Right cardiac atrium (tissue), 5 donors: ENCODE measurements at regions of chr17 and their contacts with region 1.

Region 1: DNA sequence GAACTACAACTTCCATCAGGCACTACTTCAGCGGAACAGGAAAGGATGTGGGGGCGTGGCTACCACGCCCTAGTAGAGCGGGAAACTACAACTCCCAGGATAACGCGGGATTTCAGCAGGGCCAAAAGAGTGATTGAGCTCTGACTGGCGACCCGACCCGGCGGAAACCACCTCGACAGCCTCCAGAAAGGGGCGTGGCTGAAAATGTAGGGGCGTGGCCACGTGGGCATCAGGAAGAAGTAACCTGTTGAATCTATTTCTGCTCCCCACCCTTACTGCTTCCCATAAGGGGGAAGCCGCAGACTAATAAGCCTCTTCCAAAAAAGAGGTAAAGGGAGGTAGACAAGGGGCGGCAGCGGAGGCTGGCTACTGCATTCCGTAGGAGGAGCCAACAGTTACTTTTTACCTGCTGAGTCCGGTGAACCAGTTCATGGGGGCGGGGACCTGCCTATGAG is at the start of gene TMEM102:
- DNase-seq: peak; percentile 95 to 98 (median 97)
- ATAC-seq: peak; percentile 85 to 88
- H3K4me3 ChIP-seq: peak within 1 kb of the TSS; percentile 53
- H3K27ac ChIP-seq: peak within 1 kb of the TSS; percentile 5
- H3K4me1 ChIP-seq: no peaks in the 10 kb centered on the region
- H3K27me3 ChIP-seq: no peaks in the 10 kb centered on the region
- total RNA-seq, gene TMEM102: 2.2 to 2.5 (median 2.3) TPM

Region 2: GRCh38 chr17:7363311-7363710 is 71.9 kb before region 1 on chr17:
- intact Hi-C with region 1: loop called (anchors 5 to 10 kb)
- DNase-seq: peak in 1 of 3 donors; percentile 14
- ATAC-seq: no peak
- H3K4me3 ChIP-seq: no peak overlapping the region
- H3K27ac ChIP-seq: no peak overlapping the region
- H3K4me1 ChIP-seq: no peaks in the 10 kb centered on the region
- H3K27me3 ChIP-seq: no peaks in the 10 kb centered on the region

Region 3: GRCh38 chr17:7484067-7484918 is 49.0 kb after region 1 on chr17 and contains the start of gene POLR2A:
- intact Hi-C with region 1: loop called in 2 of 4 experiments (anchors 5 kb)
- DNase-seq: peak; percentile 99 to 100 (median 100)
- ATAC-seq: peak; percentile 89 to 92
- H3K4me3 ChIP-seq: peak within 1 kb of the TSS; percentile 76
- H3K27ac ChIP-seq: peak within 1 kb of the TSS; percentile 100
- H3K4me1 ChIP-seq: peaks cover 9% of the 10 kb centered on the region
- H3K27me3 ChIP-seq: no peaks in the 10 kb centered on the region
- total RNA-seq, gene POLR2A: 41.9 to 51.4 (median 47.4) TPM

Region 4: GRCh38 chr17:7561028-7561575 is 125.9 kb after region 1 on chr17:
- intact Hi-C with region 1: loop called in 1 of 4 experiments (anchors 10 kb)
- DNase-seq: peak; percentile 92 to 96 (median 96)
- ATAC-seq: peak; percentile 68 to 76
- H3K4me3 ChIP-seq: peak overlapping the region; percentile 78
- H3K27ac ChIP-seq: peak overlapping the region; percentile 87
- H3K4me1 ChIP-seq: peaks cover 8% of the 10 kb centered on the region
- H3K27me3 ChIP-seq: no peaks in the 10 kb centered on the region

Region 5: DNA sequence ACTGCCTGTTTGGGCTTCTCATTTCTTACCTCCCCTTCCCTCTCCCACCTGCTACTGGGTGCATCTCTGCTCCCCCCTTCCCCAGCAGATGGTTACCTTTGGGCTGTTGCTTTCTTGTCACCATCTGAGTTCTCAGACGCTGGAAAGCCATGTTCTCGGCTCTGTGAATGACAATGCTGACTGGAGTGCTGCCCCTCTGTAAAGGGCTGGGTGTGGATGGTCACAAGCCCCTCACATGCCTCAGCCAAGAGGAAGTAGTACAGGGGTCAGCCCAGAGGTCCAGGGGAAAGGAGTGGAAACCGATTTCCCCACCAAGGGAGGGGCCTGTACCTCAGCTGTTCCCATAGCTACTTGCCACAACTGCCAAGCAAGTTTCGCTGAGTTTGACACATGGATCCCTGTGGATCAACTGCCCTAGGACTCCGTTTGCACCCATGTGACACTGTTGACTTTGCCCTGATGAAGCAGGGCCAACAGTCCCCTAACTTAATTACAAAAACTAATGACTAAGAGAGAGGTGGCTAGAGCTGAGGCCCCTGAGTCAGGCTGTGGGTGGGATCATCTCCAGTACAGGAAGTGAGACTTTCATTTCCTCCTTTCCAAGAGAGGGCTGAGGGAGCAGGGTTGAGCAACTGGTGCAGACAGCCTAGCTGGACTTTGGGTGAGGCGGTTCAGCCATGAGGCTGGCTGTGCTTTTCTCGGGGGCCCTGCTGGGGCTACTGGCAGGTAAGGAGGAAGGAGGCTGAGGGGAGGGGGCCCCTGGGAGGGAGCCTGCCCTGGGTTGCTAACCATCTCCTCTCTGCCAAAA is 144.0 kb after region 1 on chr17 and contains the start of gene CD68:
- intact Hi-C with region 1: no loop called
- DNase-seq: peak; percentile 76 to 81 (median 80)
- ATAC-seq: peak; percentile 54 to 68
- H3K4me3 ChIP-seq: no peak within 1 kb of the TSS
- H3K27ac ChIP-seq: peak within 1 kb of the TSS; percentile 68
- H3K4me1 ChIP-seq: peaks cover 22% of the 10 kb centered on the region
- H3K27me3 ChIP-seq: no peaks in the 10 kb centered on the region
- total RNA-seq, gene CD68: 34.6 to 45.6 (median 44.1) TPM